ENCODE measurements at regions of chr16 and their contacts with region 1.

Region 1: GRCh38 chr16:53054670-53055485 is at the start of gene CHD9:
- DNase-seq: peak; percentile 91
- ATAC-seq: peak; percentile 87
- H3K4me3 ChIP-seq: peak within 1 kb of the TSS; percentile 49 to 83 (median 78)
- H3K4me3 Mint-ChIP-seq: peak within 1 kb of the TSS; percentile 98
- H3K27ac ChIP-seq: peak within 1 kb of the TSS; percentile 65 to 82
- H3K27ac Mint-ChIP-seq: peak within 1 kb of the TSS; percentile 97
- H3K4me1 ChIP-seq: peaks cover 35 to 53% of the 10 kb centered on the region in 2 donors
- H3K4me1 Mint-ChIP-seq: peaks cover 43% of the 10 kb centered on the region
- H3K27me3 ChIP-seq: no peaks in the 10 kb centered on the region
- H3K27me3 Mint-ChIP-seq: no peaks in the 10 kb centered on the region
- CTCF ChIP-seq: peak; percentile 99
- total RNA-seq, gene CHD9: 97.5 and 102 TPM in 2 replicates

Region 2: GRCh38 chr16:53091466-53092211 is 36.8 kb after region 1 on chr16:
- CTCF ChIA-PET with region 1: interaction called, 12 read pairs
- POLR2A ChIA-PET with region 1: no interaction called
- intact Hi-C with region 1: no loop called
- DNase-seq: peak; percentile 56
- ATAC-seq: peak; percentile 64
- H3K4me3 ChIP-seq: peak overlapping the region in 1 of 5 experiments; percentile 27
- H3K4me3 Mint-ChIP-seq: peak overlapping the region; percentile 79
- H3K27ac ChIP-seq: peak overlapping the region; percentile 42 to 61
- H3K27ac Mint-ChIP-seq: peak overlapping the region; percentile 89
- H3K4me1 ChIP-seq: peaks cover 52 to 60% of the 10 kb centered on the region in 2 donors
- H3K4me1 Mint-ChIP-seq: peaks cover 71% of the 10 kb centered on the region
- H3K27me3 ChIP-seq: no peaks in the 10 kb centered on the region
- H3K27me3 Mint-ChIP-seq: no peaks in the 10 kb centered on the region
- CTCF ChIP-seq: no peak

Region 3: GRCh38 chr16:53130159-53131049 is 75.5 kb after region 1 on chr16:
- CTCF ChIA-PET with region 1: interaction called, 43 read pairs
- POLR2A ChIA-PET with region 1: interaction called, 10 read pairs
- intact Hi-C with region 1: loop called (anchors 1 kb)
- DNase-seq: peak; percentile 97
- ATAC-seq: peak; percentile 83
- H3K4me3 ChIP-seq: peak overlapping the region; percentile 58 to 73 (median 70)
- H3K4me3 Mint-ChIP-seq: peak overlapping the region; percentile 89
- H3K27ac ChIP-seq: peak overlapping the region; percentile 72 to 97
- H3K27ac Mint-ChIP-seq: peak overlapping the region; percentile 90
- H3K4me1 ChIP-seq: peaks cover 7 to 24% of the 10 kb centered on the region in 2 donors
- H3K4me1 Mint-ChIP-seq: peaks cover 39% of the 10 kb centered on the region
- H3K27me3 ChIP-seq: no peaks in the 10 kb centered on the region
- H3K27me3 Mint-ChIP-seq: no peaks in the 10 kb centered on the region
- CTCF ChIP-seq: peak; percentile 65

Region 4: DNA sequence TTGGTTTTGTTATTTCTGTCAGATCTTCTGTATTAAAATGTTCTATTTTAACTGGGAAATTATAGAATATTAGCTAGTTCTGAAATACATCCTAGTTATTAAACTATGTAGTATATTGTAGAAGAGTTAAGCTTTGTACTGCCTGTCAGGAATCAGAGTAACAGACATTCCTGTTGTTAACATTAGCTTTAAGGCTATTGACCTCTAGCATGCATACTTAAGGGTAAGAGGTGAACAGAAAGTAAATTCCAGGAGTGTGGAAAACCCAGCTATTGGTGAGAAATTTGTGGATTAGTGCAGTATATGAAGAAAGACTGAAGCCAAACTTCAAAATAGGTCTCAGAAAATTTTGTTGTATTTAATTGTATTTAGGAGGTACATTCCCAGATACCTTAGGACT is 111.2 kb after region 1 on chr16:
- CTCF ChIA-PET with region 1: interaction called, 111 read pairs
- POLR2A ChIA-PET with region 1: no interaction called
- intact Hi-C with region 1: no loop called
- DNase-seq: no peak
- ATAC-seq: no peak
- H3K4me3 ChIP-seq: no peak overlapping the region
- H3K4me3 Mint-ChIP-seq: no peak overlapping the region
- H3K27ac ChIP-seq: no peak overlapping the region
- H3K27ac Mint-ChIP-seq: no peak overlapping the region
- H3K4me1 ChIP-seq: no peaks in the 10 kb centered on the region
- H3K4me1 Mint-ChIP-seq: peaks cover 11% of the 10 kb centered on the region
- H3K27me3 ChIP-seq: no peaks in the 10 kb centered on the region
- H3K27me3 Mint-ChIP-seq: no peaks in the 10 kb centered on the region
- CTCF ChIP-seq: no peak

Region 5: DNA sequence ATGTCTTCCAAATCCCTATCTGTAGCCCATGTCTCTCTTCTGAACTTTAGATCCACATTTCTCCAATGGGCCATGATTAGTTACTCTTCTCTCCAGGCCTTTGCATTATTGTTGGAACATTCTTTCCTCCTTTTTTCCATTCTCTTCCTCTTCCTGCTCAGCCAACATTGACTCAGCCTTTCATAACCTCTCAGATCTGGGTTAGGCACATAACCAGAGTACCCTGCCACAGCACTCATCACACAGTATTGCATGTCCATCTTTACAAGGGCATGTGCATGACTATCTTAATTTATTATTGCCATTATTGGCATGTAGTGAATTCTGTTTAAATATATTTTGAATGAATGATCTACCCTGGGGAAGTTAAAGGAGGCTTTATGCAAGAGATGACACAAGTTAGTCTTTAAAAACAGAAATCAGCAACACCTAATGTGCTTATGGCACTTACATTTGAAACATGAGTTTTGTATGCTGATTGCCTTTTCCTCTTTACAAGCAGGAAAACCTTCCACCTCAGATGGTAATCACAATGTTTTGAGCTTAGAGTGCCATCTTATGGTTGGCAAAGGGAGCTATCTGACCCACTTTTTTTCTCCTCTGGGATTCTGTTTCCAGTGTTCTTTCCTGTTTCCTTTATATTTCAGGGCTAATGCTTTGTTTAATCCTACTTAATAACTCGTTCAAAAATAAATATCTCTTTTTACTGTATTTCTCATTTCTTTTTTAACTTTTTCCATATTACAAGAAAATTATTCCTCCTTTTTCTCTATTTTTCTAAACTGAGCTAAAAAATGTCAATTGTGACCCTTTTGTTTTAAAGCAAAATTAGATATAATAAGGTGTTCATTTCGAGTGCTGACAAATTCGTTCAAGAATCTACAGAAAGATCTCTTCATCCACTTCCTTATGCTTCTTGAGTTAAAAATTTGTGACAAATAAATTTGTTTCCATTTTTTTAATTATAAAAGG is 228.4 kb after region 1 on chr16:
- CTCF ChIA-PET with region 1: interaction called, 14 read pairs
- POLR2A ChIA-PET with region 1: no interaction called
- intact Hi-C with region 1: no loop called
- DNase-seq: peak; percentile 29
- ATAC-seq: no peak
- H3K4me3 ChIP-seq: no peak overlapping the region
- H3K4me3 Mint-ChIP-seq: no peak overlapping the region
- H3K27ac ChIP-seq: no peak overlapping the region
- H3K27ac Mint-ChIP-seq: no peak overlapping the region
- H3K4me1 ChIP-seq: no peaks in the 10 kb centered on the region
- H3K4me1 Mint-ChIP-seq: no peaks in the 10 kb centered on the region
- H3K27me3 ChIP-seq: no peaks in the 10 kb centered on the region
- H3K27me3 Mint-ChIP-seq: no peaks in the 10 kb centered on the region
- CTCF ChIP-seq: peak; percentile 55

Measured in B cell (primary cell).